GM12878 (cell line): ENCODE measurements at regions of chr3 and their contacts with region 1.

Region 1: GRCh38 chr3:42012935-42013690 is 51.2 kb upstream of the ULK4 start:
- DNase-seq: peak; percentile 86
- ATAC-seq: peak; percentile 83
- H3K4me3 ChIP-seq: peak overlapping the region; percentile 99
- H3K27ac ChIP-seq: peak overlapping the region; percentile 93
- H3K4me1 ChIP-seq: peaks cover 16% of the 10 kb centered on the region
- H3K27me3 ChIP-seq: no peaks in the 10 kb centered on the region
- CTCF ChIP-seq: peak in 2 of 3 experiments; percentile 2 to 15; a peak in 1 of 6 replicates
- EP300 ChIP-seq: peak; percentile 69 to 78; a peak in 2 of 4 replicates
- POLR2A ChIP-seq: peak; percentile 88
- RAD21 ChIP-seq: no peak

Region 2: GRCh38 chr3:41961750-41962679 is 51.1 kb before region 1 on chr3 and contains the start of gene ULK4:
- CTCF ChIA-PET with region 1: interaction called, 4 read pairs
- POLR2A ChIA-PET with region 1: interaction called, 6 read pairs
- RAD21 ChIA-PET with region 1: interaction called, 9 read pairs
- SMC1A ChIA-PET with region 1: interaction called, 9 read pairs
- in situ Hi-C with region 1: no loop called
- intact Hi-C with region 1: loop called (anchors 2 kb)
- DNase-seq: peak; percentile 97
- ATAC-seq: peak; percentile 96
- H3K4me3 ChIP-seq: peak within 1 kb of the TSS; percentile 86
- H3K27ac ChIP-seq: peak within 1 kb of the TSS; percentile 61
- H3K4me1 ChIP-seq: no peaks in the 10 kb centered on the region
- H3K27me3 ChIP-seq: no peaks in the 10 kb centered on the region
- CTCF ChIP-seq: no peak
- EP300 ChIP-seq: no peak
- POLR2A ChIP-seq: peak; percentile 50; the same call in 1 of the 2 replicates
- RAD21 ChIP-seq: no peak
- polyA plus RNA-seq, gene ULK4: 4.5 to 6.4 TPM

Region 3: DNA sequence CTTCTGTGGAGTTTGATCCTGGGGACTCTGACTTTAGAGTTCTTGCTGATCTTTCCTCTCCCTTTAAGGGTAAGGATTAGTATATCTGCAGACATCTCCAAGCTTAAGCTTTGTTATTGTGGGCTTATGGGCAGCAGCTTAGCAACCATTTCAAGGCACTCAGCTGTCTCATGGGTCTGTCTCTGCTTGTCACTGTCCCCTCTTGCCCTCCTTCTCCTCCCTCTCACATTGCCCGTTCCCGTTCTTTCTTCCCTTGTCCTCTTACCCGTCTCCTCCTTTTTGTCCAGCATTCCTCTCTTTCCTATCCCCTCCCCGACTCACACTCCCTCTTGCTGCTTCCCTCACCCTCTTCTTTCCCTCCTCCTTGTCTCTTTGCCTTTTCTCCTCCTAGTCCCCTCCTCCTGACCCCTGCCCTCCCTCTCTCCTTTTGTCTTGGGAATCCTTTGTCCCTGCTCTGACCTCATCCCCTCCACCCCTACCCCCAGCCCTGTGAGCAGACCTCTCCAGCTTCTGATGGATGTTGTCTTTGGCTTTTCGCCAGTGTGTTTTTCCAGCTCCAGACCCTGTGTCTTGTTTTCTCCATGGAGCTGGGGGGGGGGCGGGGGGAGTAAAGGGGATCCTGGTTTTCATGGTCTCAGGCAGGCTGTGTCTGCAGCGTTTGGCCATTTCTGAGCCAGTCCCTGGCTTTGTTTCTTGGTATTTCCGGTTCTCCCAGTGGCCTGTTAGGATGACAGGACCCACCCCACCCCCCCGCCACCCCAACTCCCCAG is 30.1 kb after region 1 on chr3:
- CTCF ChIA-PET with region 1: interaction called, 15 read pairs
- POLR2A ChIA-PET with region 1: interaction called, 15 read pairs
- RAD21 ChIA-PET with region 1: interaction called, 21 read pairs
- SMC1A ChIA-PET with region 1: interaction called, 109 read pairs
- in situ Hi-C with region 1: no loop called
- intact Hi-C with region 1: loop called (anchors 5 kb)
- DNase-seq: no peak
- ATAC-seq: peak; percentile 62
- H3K4me3 ChIP-seq: no peak overlapping the region
- H3K27ac ChIP-seq: no peak overlapping the region
- H3K4me1 ChIP-seq: peaks cover 49% of the 10 kb centered on the region
- H3K27me3 ChIP-seq: no peaks in the 10 kb centered on the region
- CTCF ChIP-seq: no peak
- EP300 ChIP-seq: no peak
- POLR2A ChIP-seq: no peak
- RAD21 ChIP-seq: no peak

Region 4: GRCh38 chr3:42067326-42067725 is 54.2 kb after region 1 on chr3:
- CTCF ChIA-PET with region 1: interaction called, 3 read pairs
- POLR2A ChIA-PET with region 1: interaction called, 8 read pairs
- RAD21 ChIA-PET with region 1: interaction called, 14 read pairs
- SMC1A ChIA-PET with region 1: interaction called, 10 read pairs
- in situ Hi-C with region 1: no loop called
- intact Hi-C with region 1: no loop called
- DNase-seq: peak; percentile 86
- ATAC-seq: peak; percentile 91
- H3K4me3 ChIP-seq: peak overlapping the region; percentile 48; the same call in 1 of the 2 replicates
- H3K27ac ChIP-seq: peak overlapping the region; percentile 86
- H3K4me1 ChIP-seq: peaks cover 35% of the 10 kb centered on the region
- H3K27me3 ChIP-seq: no peaks in the 10 kb centered on the region
- CTCF ChIP-seq: no peak
- EP300 ChIP-seq: peak; percentile 51 to 91; a peak in 3 of 4 replicates
- POLR2A ChIP-seq: no peak
- RAD21 ChIP-seq: no peak

Region 5: DNA sequence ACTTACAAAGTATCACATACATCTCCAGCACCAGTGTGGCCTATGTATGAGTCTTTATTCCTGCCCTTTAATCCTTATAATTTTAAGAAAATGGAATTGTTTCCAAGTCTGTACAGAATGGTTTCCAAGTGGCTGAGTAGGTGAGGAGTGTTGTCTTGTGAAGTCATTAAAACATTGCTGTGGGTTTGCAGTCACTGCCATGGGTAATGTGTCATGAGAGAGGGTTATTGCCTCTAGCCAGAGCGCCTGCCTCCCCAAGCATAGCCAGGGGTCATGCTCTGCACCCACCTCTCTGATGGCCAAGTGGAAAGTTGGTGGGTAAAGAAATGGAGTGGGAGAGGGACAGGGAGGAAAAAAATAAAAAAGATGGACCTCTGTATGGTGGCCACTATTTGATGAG is 103.4 kb after region 1 on chr3:
- CTCF ChIA-PET with region 1: no interaction called
- POLR2A ChIA-PET with region 1: no interaction called
- RAD21 ChIA-PET with region 1: no interaction called
- SMC1A ChIA-PET with region 1: no interaction called
- in situ Hi-C with region 1: no loop called
- intact Hi-C with region 1: no loop called
- DNase-seq: no peak
- ATAC-seq: no peak
- H3K4me3 ChIP-seq: no peak overlapping the region
- H3K27ac ChIP-seq: no peak overlapping the region
- H3K4me1 ChIP-seq: peaks cover 30% of the 10 kb centered on the region
- H3K27me3 ChIP-seq: no peaks in the 10 kb centered on the region
- CTCF ChIP-seq: no peak
- EP300 ChIP-seq: no peak
- POLR2A ChIP-seq: no peak
- RAD21 ChIP-seq: no peak

Region 6: DNA sequence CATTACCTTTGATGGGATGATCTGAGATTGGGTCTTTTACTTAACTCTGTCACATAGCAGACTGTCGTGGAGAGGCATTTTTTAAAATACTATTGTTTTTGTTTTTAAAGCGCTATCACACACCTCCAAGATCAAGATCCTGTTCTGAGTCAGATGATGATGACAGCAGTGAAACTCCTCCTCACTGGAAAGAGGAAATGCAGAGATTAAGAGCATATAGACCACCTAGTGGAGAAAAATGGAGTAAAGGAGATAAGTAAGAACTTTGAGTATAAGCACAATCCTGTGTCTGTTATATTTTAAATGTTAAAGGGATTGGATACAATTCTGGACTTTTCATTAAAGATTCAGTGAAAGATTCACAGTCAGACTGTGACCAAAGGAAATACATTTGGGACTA is 622.0 kb after region 1 on chr3:
- CTCF ChIA-PET with region 1: no interaction called
- POLR2A ChIA-PET with region 1: no interaction called
- RAD21 ChIA-PET with region 1: no interaction called
- SMC1A ChIA-PET with region 1: no interaction called
- in situ Hi-C with region 1: no loop called
- intact Hi-C with region 1: no loop called
- DNase-seq: no peak
- ATAC-seq: peak; percentile 81
- H3K4me3 ChIP-seq: no peak overlapping the region
- H3K27ac ChIP-seq: no peak overlapping the region
- H3K4me1 ChIP-seq: peaks cover 17% of the 10 kb centered on the region
- H3K27me3 ChIP-seq: no peaks in the 10 kb centered on the region
- CTCF ChIP-seq: peak in 2 of 3 experiments; percentile 13 to 28; a peak in 1 of 6 replicates
- EP300 ChIP-seq: no peak
- POLR2A ChIP-seq: no peak
- RAD21 ChIP-seq: peak; percentile 50